Activated B cell treated with CpG ODN at 0.5 μM for 24 hours (primary cell): ENCODE measurements at regions of chr18 and their contacts with region 1.

Region 1: GRCh38 chr18:59899298-59900221 is at the start of gene PMAIP1:
- DNase-seq: peak; percentile 89
- ATAC-seq: peak; percentile 80
- H3K4me3 Mint-ChIP-seq: peak within 1 kb of the TSS; percentile 92
- H3K27ac Mint-ChIP-seq: peak within 1 kb of the TSS; percentile 99
- H3K4me1 Mint-ChIP-seq: peaks cover 40% of the 10 kb centered on the region
- H3K27me3 Mint-ChIP-seq: no peaks in the 10 kb centered on the region
- CTCF ChIP-seq: no peak
- total RNA-seq, gene PMAIP1: 68.5 and 69.9 TPM in 2 replicates

Region 2: GRCh38 chr18:59358712-59359575 is 540.6 kb before region 1 on chr18 and contains the start of gene LMAN1:
- CTCF ChIA-PET with region 1: no interaction called
- POLR2A ChIA-PET with region 1: no interaction called
- intact Hi-C with region 1: loop called (anchors 5 kb)
- DNase-seq: peak; percentile 92
- ATAC-seq: peak; percentile 96
- H3K4me3 Mint-ChIP-seq: peak within 1 kb of the TSS; percentile 94
- H3K27ac Mint-ChIP-seq: peak within 1 kb of the TSS; percentile 82
- H3K4me1 Mint-ChIP-seq: peaks cover 35% of the 10 kb centered on the region
- H3K27me3 Mint-ChIP-seq: peaks cover 2% of the 10 kb centered on the region
- CTCF ChIP-seq: no peak
- total RNA-seq, gene LMAN1: 33.5 and 40.3 TPM in 2 replicates

Region 3: GRCh38 chr18:59861963-59862819 is 37.4 kb before region 1 on chr18:
- CTCF ChIA-PET with region 1: no interaction called
- POLR2A ChIA-PET with region 1: interaction called, 20 read pairs
- intact Hi-C with region 1: no loop called
- DNase-seq: no peak
- ATAC-seq: peak; percentile 82
- H3K4me3 Mint-ChIP-seq: no peak overlapping the region
- H3K27ac Mint-ChIP-seq: no peak overlapping the region
- H3K4me1 Mint-ChIP-seq: peaks cover 23% of the 10 kb centered on the region
- H3K27me3 Mint-ChIP-seq: no peaks in the 10 kb centered on the region
- CTCF ChIP-seq: no peak

Region 4: GRCh38 chr18:59918320-59918755 is 18.8 kb after region 1 on chr18:
- CTCF ChIA-PET with region 1: no interaction called
- POLR2A ChIA-PET with region 1: interaction called, 103 read pairs
- intact Hi-C with region 1: loop called (anchors 1 kb)
- DNase-seq: peak; percentile 50
- ATAC-seq: peak; percentile 82
- H3K4me3 Mint-ChIP-seq: peak overlapping the region; percentile 57
- H3K27ac Mint-ChIP-seq: peak overlapping the region; percentile 44
- H3K4me1 Mint-ChIP-seq: peaks cover 40% of the 10 kb centered on the region
- H3K27me3 Mint-ChIP-seq: no peaks in the 10 kb centered on the region
- CTCF ChIP-seq: no peak

Region 5: GRCh38 chr18:59957971-59958595 is 58.5 kb after region 1 on chr18:
- CTCF ChIA-PET with region 1: interaction called, 6 read pairs
- POLR2A ChIA-PET with region 1: interaction called, 46 read pairs
- intact Hi-C with region 1: loop called (anchors 1 kb)
- DNase-seq: no peak
- ATAC-seq: no peak
- H3K4me3 Mint-ChIP-seq: no peak overlapping the region
- H3K27ac Mint-ChIP-seq: peak overlapping the region; percentile 43
- H3K4me1 Mint-ChIP-seq: peaks cover 63% of the 10 kb centered on the region
- H3K27me3 Mint-ChIP-seq: no peaks in the 10 kb centered on the region
- CTCF ChIP-seq: no peak